Activated CD8-positive, alpha-beta T cell treated with anti-CD3 and anti-CD28 coated beads for 36 hours (primary cell): ENCODE measurements at regions of chr14 and their contacts with region 1.

Region 1: DNA sequence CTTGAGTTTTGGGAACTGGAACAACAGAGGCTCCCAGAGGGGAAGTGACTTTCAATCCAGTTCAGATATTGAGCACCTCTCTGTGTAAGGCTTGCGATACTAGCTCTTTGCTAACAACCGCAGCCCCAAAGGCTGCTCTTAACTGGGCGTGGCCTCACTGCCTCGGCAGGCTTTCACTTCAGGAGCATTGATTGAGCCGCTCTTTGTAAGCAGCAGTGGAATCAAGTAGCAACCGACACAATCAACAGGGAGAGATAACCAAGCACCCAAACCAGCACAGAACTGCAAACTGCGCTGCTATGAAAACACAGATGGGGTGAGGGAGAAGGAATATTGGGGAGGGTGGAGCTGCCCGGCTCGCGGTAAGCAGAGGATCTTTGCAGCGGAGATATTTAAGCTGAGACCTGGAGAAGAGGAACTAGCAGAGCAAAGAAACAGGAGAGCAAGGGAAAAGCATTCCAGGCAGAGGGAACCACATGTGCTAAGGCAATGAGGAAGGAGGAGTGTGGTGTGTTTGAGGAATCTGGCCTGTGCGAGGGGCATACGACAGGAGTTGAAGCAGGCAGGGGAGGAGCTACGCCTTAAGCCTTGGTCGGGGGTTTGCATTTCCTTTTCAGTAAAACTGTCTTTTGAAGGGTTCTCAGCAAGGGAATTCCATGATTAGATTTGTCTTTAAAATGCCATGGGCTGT is 17.3 kb upstream of the YY1 start:
- DNase-seq: peak; percentile 84
- ATAC-seq: peak; percentile 91
- H3K4me3 Mint-ChIP-seq: no peak overlapping the region
- H3K27ac Mint-ChIP-seq: no peak overlapping the region
- H3K4me1 Mint-ChIP-seq: peaks cover 5% of the 10 kb centered on the region
- H3K27me3 Mint-ChIP-seq: no peaks in the 10 kb centered on the region
- CTCF ChIP-seq: no peak

Region 2: DNA sequence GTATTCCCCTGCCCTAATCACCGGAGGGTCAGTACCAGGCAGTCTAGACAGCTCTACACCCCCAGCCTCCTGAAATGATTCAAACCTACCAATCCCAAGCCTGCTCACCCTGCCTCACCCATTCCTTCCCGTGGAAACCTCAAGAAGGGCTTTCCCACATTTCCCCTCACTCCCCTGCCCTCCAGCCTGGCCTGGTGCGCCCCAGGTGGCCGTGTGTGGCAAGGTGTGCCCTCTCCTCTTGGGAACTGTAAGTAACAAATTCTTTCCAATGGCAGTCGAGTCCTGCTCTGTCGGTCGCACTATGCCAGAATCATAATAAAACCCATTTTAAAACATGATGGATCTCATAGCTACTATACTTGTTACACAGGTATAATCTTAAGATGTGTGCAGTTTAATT is 48.3 kb before region 1 on chr14:
- CTCF ChIA-PET with region 1: no interaction called
- POLR2A ChIA-PET with region 1: no interaction called
- intact Hi-C with region 1: no loop called
- DNase-seq: no peak
- ATAC-seq: no peak
- H3K4me3 Mint-ChIP-seq: no peak overlapping the region
- H3K27ac Mint-ChIP-seq: no peak overlapping the region
- H3K4me1 Mint-ChIP-seq: peaks cover 3% of the 10 kb centered on the region
- H3K27me3 Mint-ChIP-seq: peaks cover 3% of the 10 kb centered on the region
- CTCF ChIP-seq: no peak

Region 3: DNA sequence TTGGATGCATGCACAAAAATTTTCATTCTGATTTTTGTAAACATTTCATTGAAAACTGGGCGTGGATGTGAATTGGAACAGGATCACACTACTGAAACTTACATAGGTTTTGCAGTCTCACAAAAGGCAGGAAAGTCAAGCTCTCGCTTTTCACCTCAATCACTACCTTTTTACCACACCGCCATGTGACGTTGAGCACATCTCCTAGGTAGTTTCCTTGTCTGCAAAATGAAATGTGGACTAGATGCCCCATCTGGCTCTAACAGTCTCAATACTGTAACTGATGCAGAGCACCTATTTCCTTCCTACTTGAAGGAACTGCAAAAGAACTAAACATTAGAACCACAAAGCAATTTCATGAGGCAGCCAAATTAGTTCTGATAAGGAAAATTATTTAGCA is 12.8 kb after region 1 on chr14:
- CTCF ChIA-PET with region 1: interaction called, 24 read pairs
- POLR2A ChIA-PET with region 1: interaction called, 25 read pairs
- intact Hi-C with region 1: no loop called
- DNase-seq: no peak
- ATAC-seq: no peak
- H3K4me3 Mint-ChIP-seq: no peak overlapping the region
- H3K27ac Mint-ChIP-seq: peak overlapping the region; percentile 77
- H3K4me1 Mint-ChIP-seq: peaks cover 49% of the 10 kb centered on the region
- H3K27me3 Mint-ChIP-seq: no peaks in the 10 kb centered on the region
- CTCF ChIP-seq: no peak

Region 4: GRCh38 chr14:100239840-100240724 is 18.4 kb after region 1 on chr14:
- CTCF ChIA-PET with region 1: interaction called, 24 read pairs
- POLR2A ChIA-PET with region 1: interaction called, 25 read pairs
- intact Hi-C with region 1: no loop called
- DNase-seq: peak; percentile 88
- ATAC-seq: peak; percentile 52
- H3K4me3 Mint-ChIP-seq: peak overlapping the region; percentile 97
- H3K27ac Mint-ChIP-seq: peak overlapping the region; percentile 93
- H3K4me1 Mint-ChIP-seq: peaks cover 45% of the 10 kb centered on the region
- H3K27me3 Mint-ChIP-seq: no peaks in the 10 kb centered on the region
- CTCF ChIP-seq: peak; percentile 77

Region 5: DNA sequence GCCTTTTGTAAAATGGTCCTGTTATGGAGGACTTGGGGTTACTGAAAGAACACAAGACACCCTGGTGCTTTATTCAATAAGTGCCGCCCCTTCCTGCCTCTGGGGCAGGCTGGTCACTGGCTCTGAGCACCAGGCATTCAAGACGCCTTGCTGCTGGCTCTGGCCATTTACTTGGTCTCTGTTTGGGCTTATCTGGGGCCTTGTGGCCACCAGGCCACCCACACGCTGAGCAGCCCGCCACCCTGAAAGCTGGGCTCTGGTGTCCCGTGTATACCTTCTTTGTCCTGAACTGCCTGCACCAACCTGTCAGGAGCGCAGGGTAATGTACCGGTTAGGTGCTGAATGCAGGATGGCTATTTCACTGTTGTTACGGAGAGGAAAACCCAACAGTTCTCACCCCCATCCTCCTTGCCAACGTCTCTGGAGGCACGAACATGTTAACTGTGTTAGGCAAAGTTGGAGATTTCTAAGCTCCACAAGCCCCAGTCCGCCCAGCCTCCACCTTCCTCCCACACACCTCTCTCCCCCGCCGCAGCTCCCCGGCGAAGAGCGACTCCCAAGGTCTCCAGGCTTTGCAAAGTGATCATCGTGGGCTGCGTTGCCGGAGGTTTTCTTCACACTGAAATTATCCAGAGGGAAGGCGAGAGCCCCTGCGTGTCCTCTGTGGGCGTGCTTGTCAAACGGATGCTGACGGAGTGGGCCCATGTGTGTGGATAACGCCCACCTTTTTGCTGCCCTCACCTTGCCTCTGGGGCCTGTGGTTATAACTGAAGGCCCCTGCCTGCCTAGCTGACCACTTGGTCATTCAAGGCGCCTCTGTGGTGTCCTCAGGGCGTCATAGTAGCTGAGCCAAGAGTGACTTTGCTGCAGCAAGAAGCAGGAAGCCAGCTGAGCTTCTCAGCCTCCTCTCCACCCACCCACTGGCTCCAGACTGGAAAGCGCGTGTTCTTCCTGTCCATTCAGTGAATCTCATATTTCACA is 384.3 kb after region 1 on chr14:
- CTCF ChIA-PET with region 1: no interaction called
- POLR2A ChIA-PET with region 1: no interaction called
- intact Hi-C with region 1: no loop called
- DNase-seq: no peak
- ATAC-seq: no peak
- H3K4me3 Mint-ChIP-seq: no peak overlapping the region
- H3K27ac Mint-ChIP-seq: no peak overlapping the region
- H3K4me1 Mint-ChIP-seq: no peaks in the 10 kb centered on the region
- H3K27me3 Mint-ChIP-seq: peaks cover 11% of the 10 kb centered on the region
- CTCF ChIP-seq: no peak